BJ (cell line): ENCODE measurements at regions of chr12 and their contacts with region 1.

Region 1: DNA sequence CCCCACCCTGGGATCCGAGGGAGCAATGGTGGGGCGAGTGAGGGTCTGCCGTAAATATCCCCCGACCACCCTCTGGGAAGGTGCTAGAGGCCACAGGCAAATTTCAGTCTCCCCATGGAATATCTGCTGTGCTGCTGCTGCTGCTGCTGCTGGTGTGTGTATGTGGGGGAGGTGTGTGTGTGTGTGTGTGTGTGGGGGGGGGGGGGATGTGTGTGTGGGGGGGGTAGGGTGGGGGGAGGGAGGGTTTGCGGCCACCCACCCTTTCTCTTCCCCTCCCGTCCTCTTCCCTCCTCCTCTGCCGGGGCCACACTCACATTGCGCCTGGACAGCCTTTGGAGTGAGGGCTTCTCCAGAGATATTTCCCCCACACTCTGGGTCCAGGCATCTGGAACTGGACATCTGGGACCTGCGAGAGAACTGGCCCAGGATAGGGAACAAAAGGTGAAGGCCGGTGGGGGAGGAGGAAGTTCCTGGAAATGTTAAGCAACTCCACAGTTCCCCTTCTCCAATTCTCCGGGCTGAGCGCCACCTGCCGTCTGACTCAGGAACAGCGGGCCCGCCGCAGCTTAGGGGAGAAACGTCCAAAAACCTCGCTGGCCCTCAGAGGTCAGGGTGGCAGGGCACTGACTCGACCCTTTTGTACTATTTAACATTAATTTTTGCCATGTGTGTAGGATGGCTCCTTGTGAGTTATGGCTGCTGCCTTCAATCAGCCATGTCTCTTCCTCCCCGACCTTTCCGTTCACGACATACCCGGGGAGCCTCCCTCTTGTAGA is at the start of gene C1RL:
- DNase-seq: no peak
- H3K4me3 ChIP-seq: peak within 1 kb of the TSS; percentile 68
- H3K27me3 ChIP-seq: no peaks in the 10 kb centered on the region
- CTCF ChIP-seq: peak; percentile 98
- polyA plus RNA-seq, gene C1RL: 33.6 and 50.5 TPM in 2 replicates

Region 2: GRCh38 chr12:6965026-6965661 is 143.8 kb before region 1 on chr12:
- CTCF ChIA-PET with region 1: interaction called, 13 read pairs
- POLR2A ChIA-PET with region 1: no interaction called
- DNase-seq: peak; percentile 37
- H3K4me3 ChIP-seq: no peak overlapping the region
- H3K27me3 ChIP-seq: no peaks in the 10 kb centered on the region
- CTCF ChIP-seq: peak; percentile 92

Region 3: DNA sequence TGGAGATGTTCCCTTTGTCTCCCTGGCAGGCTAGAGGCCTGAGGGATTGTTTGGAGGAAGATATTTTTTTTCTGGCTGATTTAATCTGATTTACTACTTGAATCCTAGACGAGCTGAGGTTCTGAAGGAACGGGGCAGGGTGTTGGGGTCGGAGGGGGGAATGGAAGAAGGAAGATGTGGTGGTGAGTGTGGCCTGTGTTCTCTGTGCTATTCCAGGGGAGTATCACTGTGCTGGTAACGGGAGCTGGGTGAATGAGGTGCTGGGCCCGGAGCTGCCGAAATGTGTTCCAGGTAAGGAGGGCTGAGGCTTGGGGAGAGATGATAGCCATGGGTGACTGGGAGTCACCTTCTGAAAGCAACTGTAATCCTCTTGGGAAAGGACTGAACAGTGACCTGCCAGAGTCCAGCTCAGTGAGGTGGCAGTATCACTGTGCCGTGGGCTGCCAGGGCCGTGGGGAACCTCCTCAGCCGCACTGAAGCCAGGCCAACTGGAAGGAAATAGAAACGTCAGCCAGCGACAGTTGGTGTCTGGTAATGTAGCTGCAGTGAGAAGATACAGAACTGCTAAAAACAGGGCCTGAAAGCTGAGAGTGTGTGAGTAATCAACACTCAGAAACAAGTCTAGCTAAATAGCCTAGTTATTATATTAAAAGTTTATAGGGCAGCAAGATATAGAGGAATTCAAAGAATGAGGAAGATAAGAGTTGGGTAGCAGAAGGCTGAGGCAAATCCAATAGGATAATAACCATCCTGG is 40.6 kb before region 1 on chr12:
- CTCF ChIA-PET with region 1: interaction called, 10 read pairs
- POLR2A ChIA-PET with region 1: no interaction called
- DNase-seq: no peak
- H3K4me3 ChIP-seq: no peak overlapping the region
- H3K27me3 ChIP-seq: no peaks in the 10 kb centered on the region
- CTCF ChIP-seq: no peak

Region 4: GRCh38 chr12:7122811-7123769 is 14.1 kb after region 1 on chr12:
- CTCF ChIA-PET with region 1: interaction called, 29 read pairs
- POLR2A ChIA-PET with region 1: no interaction called
- DNase-seq: no peak
- H3K4me3 ChIP-seq: no peak overlapping the region
- H3K27me3 ChIP-seq: no peaks in the 10 kb centered on the region
- CTCF ChIP-seq: no peak